Adrenal gland (tissue), 19 donors: ENCODE measurements at regions of chr2 and their contacts with region 1.

Region 1: DNA sequence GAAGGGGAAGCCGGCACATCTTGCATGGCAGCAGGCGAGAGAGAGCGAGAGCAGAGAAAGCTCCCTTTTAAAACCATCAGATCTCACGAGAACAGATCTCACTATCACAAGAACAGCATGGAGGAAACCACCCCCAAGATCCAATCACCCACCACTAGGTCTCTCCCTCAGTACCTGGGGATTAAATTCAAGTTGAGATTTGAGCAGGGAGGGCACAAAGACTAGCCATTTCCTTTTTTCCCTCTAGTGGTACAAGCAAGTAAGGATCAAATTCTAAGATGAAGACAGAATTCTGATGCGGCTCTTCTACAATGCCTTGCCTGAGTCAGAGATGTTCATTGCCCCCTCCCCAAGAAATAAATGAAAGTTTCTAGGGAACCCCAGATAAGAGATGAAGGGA is 45.6 kb upstream of the ANKRD44 start:
- DNase-seq: no peak
- H3K4me3 ChIP-seq: no peak overlapping the region
- H3K27ac ChIP-seq: no peak overlapping the region
- H3K4me1 ChIP-seq: peaks cover 5 to 6% of the 10 kb centered on the region in 2 donors
- H3K27me3 ChIP-seq: no peaks in the 10 kb centered on the region
- CTCF ChIP-seq: peak; percentile 14 to 29 (median 24)
- POLR2A ChIP-seq: no peak

Region 2: DNA sequence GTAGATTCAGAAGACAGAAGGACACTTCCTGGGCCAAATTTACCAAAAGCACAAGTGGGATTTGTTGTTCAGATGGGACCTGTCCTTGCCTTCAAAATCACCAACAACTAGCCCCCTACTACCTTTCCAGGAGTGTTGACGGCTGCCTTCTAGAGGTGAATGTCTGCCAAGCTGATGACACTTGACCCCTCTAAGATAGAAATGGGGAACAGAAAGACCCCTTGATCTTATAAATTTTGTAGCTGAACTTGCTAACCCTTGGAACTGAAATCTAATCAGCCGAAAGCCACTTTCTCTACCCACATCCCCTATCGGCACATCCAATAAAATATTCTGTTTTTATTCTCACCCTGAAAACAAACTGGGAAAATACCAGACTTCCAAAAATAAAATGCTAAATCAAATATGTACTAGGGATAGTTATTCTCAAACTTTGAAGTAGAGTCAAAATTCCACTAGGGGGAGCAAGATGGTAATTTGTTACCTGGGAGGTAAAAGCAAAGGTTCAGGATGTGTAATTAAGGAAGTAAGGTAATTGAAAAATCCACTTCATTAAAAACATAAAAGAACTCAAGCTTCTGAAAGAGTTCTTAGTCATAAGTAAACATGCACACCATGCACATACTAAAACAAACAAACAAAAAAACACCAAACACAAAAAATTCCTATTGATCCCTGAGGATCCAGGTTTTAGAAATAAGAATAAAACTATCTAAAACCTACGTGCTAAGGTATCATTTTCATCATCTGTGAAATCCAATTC is 164.8 kb before region 1 on chr2:
- intact Hi-C with region 1: no loop called
- DNase-seq: no peak
- H3K4me3 ChIP-seq: no peak overlapping the region
- H3K27ac ChIP-seq: no peak overlapping the region
- H3K4me1 ChIP-seq: peaks cover 6 to 18% of the 10 kb centered on the region in 2 donors
- H3K27me3 ChIP-seq: no peaks in the 10 kb centered on the region
- CTCF ChIP-seq: peak; percentile 62 to 90 (median 73)
- POLR2A ChIP-seq: no peak

Region 3: DNA sequence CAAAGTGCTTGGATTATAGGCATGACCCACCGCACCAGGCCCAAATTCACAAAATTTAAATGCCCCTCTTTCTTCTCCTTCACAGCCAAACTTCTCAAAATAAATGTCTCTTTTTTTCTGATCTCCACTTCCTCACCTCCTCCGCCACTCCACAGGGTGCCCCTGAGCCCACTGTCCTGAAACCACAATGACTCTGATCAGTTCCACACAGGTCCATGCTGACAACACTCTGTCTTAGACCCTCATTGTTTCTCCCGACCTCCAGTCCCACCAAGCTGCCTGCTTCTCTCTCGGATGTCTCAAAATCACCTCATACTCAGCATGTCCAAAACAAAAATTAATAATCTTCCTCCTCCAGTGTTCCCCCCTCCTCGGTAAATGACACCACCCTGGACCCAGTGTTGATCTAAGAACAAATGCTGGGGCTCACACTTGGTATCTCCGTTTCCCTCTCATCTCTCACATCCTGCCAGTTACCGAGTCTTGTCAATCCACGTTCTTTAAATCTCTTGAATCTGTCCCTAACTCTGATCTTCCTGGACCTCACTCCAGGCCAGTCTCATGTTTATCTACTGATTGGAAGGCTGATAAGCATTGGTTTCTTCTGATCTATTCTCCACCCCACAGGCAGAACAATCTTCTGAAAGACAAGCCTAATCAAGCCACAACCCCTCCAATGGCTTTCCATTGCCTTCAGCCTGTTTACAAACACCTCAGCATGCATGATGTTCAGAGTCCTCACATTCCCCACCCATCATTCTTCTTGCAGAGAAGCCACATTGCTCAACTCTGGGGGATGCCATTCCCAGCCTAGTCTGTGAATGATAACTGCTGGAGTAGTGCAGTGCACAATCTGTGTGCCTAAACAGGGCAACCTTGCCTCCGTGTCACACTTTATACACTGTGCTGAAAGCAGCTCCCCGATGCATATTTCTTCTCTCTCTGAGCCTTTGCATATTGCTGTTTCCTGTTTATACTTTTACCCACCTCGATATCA is 33.1 kb before region 1 on chr2:
- intact Hi-C with region 1: loop called in 1 of 2 experiments (anchors 5 kb)
- DNase-seq: no peak
- H3K4me3 ChIP-seq: no peak overlapping the region
- H3K27ac ChIP-seq: no peak overlapping the region
- H3K4me1 ChIP-seq: no peaks in the 10 kb centered on the region
- H3K27me3 ChIP-seq: no peaks in the 10 kb centered on the region
- CTCF ChIP-seq: no peak
- POLR2A ChIP-seq: no peak